ENCODE measurements at regions of chr18 and their contacts with region 1.

Region 1: GRCh38 chr18:38198956-38199355 is 633.4 kb upstream of the CELF4 start:
- DNase-seq: no peak
- ATAC-seq: no peak
- H3K4me3 ChIP-seq: no peak overlapping the region
- H3K27ac ChIP-seq: no peak overlapping the region
- H3K4me1 ChIP-seq: no peaks in the 10 kb centered on the region
- H3K27me3 ChIP-seq: no peaks in the 10 kb centered on the region
- CTCF ChIP-seq: no peak

Region 2: GRCh38 chr18:38007676-38008330 is 191.2 kb before region 1 on chr18:
- intact Hi-C with region 1: no loop called
- DNase-seq: no peak
- ATAC-seq: no peak
- H3K4me3 ChIP-seq: no peak overlapping the region
- H3K27ac ChIP-seq: no peak overlapping the region
- H3K4me1 ChIP-seq: no peaks in the 10 kb centered on the region
- H3K27me3 ChIP-seq: no peaks in the 10 kb centered on the region
- CTCF ChIP-seq: no peak

Region 3: DNA sequence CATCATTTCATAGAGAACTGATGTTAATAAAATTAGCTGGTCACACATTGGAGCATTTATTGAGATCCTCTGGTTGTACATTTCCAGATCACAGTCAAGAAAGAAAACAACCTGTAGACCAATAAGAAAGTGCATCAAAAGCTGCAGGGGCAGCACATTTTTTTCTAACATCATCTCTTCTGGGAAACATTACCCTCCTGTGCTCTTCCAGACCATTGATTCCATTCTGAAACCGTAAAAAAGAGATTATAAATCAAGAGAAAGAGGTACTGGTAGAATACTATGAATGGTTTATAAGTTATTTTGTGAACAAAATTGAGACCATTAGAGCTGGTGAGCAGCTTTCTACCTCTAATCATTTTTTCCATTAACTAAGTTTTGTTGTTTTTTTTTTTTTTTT is 914.8 kb after region 1 on chr18:
- intact Hi-C with region 1: loop called in 1 of 2 experiments (anchors 5 kb)
- DNase-seq: no peak
- ATAC-seq: no peak
- H3K4me3 ChIP-seq: no peak overlapping the region
- H3K27ac ChIP-seq: no peak overlapping the region
- H3K4me1 ChIP-seq: no peaks in the 10 kb centered on the region
- H3K27me3 ChIP-seq: no peaks in the 10 kb centered on the region
- CTCF ChIP-seq: no peak

Measured in psoas muscle (tissue), 8 donors.